Ascending aorta (tissue), 2 donors: ENCODE measurements at regions of chr10 and their contacts with region 1.

Region 1: GRCh38 chr10:124025660-124026588 is 67.5 kb downstream of the CHST15 start:
- DNase-seq: no peak
- H3K4me3 ChIP-seq: no peak overlapping the region
- H3K27ac ChIP-seq: no peak overlapping the region
- H3K4me1 ChIP-seq: peaks cover 0 to 4% of the 10 kb centered on the region in 2 donors
- H3K27me3 ChIP-seq: no peaks in the 10 kb centered on the region
- CTCF ChIP-seq: peak; percentile 51 to 67 (median 61)

Region 2: DNA sequence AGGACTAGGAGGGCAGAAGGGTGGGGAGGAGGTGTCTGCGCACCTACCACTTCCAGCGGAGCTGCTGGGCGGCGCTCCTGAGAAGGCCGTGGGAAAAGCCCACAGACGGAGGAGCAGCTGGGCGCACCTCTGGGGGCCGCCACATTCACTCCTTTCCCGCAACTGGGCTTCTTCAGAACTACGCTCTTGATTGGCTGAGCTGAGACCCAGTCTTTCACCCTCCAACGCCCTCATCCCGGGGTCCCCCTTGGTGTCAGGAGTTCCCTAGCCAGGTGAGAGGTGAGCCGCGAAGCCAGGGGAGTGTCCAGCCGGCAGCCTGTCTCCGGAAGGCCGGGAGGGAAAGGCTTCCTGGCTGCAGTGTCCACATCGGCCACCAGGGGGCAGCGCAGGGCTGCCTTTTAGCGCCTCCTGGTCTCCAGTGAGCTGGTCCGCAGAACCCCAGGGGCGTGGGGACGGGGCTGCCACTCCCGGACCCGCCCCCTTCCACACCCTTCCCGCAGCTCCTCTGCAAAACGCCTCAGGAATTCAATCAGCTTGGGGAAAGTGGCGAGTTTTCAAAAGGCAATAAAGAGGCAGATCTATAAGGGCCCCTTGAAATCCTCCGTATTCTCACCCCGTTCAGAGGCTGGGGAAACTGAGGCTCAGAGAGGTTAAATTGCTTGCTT is 31.4 kb before region 1 on chr10:
- intact Hi-C with region 1: loop called (anchors 1 kb)
- DNase-seq: peak in 1 of 2 donors; percentile 92
- H3K4me3 ChIP-seq: peak overlapping the region; percentile 23 to 56
- H3K27ac ChIP-seq: no peak overlapping the region
- H3K4me1 ChIP-seq: peaks cover 3 to 8% of the 10 kb centered on the region in 2 donors
- H3K27me3 ChIP-seq: peaks cover 14% of the 10 kb centered on the region
- CTCF ChIP-seq: peak; percentile 98 to 100 (median 98)

Region 3: DNA sequence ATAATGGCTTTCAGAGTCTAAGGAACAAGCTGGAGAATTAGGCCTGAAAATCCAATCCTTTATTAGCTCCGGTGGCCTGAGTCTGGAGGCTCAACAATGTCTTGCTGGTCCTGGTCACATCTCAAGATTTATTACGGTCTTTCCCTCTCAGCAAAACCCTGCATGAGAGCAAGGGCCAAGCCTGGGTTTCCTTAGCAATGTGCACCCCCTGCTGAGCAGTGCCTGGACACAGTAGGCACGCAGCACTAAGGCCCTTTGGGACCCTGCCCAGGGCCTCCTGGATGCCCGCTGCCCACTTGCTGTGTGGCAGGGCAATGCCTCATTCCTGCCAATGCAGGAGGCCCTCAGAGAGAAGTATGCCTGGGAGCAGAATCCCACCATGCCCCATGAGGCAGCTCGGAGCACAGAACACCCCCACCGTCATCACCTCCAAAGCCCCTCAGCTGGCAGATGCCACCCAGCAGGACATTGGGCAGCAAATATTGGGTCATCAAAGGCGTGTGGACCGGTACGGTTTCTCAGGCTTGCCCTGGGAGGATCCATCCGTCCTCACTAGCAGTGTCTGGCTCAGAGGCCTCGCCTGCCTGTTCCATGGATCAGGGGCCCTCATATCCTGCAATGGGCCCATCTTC is 236.4 kb after region 1 on chr10:
- intact Hi-C with region 1: loop called (anchors 1 kb)
- DNase-seq: no peak
- H3K4me3 ChIP-seq: no peak overlapping the region
- H3K27ac ChIP-seq: no peak overlapping the region
- H3K4me1 ChIP-seq: no peaks in the 10 kb centered on the region
- H3K27me3 ChIP-seq: no peaks in the 10 kb centered on the region
- CTCF ChIP-seq: peak in 1 of 3 experiments; percentile 26